Activated CD8-positive, alpha-beta T cell treated with anti-CD3 and anti-CD28 coated beads, Interleukin-2, amount 10 ng/mL, durations not matched to agents 7 days and 5 days (primary cell): ENCODE measurements at regions of chr14 and their contacts with region 1.

Region 1: GRCh38 chr14:35229495-35230089 is 62.6 kb upstream of the PSMA6 start:
- DNase-seq: no peak
- ATAC-seq: no peak
- H3K4me3 Mint-ChIP-seq: no peak overlapping the region
- H3K27ac Mint-ChIP-seq: no peak overlapping the region
- H3K4me1 Mint-ChIP-seq: peaks cover 21% of the 10 kb centered on the region
- H3K27me3 Mint-ChIP-seq: no peaks in the 10 kb centered on the region

Region 2: DNA sequence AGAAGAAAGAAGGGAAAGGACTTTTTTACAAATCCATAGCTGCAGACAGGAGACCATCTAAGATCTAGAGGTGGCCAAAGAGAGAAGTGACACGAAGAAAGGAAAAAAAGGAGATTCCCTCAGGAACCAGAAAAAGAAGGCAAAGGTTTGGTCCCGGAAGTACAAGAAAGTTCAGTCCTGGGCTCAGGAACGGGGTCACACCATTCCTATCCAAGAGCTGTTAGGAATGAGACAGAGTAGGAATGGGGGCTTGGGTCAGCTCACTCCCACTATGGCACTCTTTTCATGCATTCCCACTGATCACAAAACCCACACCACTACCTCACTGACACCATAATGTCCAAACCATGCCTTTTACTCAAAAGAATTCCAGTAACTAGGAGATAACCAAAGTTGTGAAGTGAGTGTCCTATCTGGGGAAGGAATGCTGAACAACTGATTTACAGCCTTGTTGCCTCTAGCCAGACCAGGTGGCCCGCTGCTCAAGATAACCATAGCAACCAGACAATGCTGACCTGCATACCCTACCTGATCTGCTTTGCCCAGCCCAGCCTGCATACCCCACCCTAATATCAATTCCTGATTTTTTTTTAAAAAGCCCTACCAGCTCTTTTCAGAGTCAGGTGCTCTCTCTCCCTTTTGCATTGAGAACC is 116.2 kb before region 1 on chr14:
- CTCF ChIA-PET with region 1: no interaction called
- POLR2A ChIA-PET with region 1: no interaction called
- DNase-seq: no peak
- ATAC-seq: no peak
- H3K4me3 Mint-ChIP-seq: no peak overlapping the region
- H3K27ac Mint-ChIP-seq: no peak overlapping the region
- H3K4me1 Mint-ChIP-seq: peaks cover 15% of the 10 kb centered on the region
- H3K27me3 Mint-ChIP-seq: no peaks in the 10 kb centered on the region

Region 3: GRCh38 chr14:35285168-35286002 is 55.8 kb after region 1 on chr14:
- CTCF ChIA-PET with region 1: interaction called, 44 read pairs
- POLR2A ChIA-PET with region 1: interaction called, 4 read pairs
- DNase-seq: peak; percentile 42
- ATAC-seq: peak; percentile 80
- H3K4me3 Mint-ChIP-seq: peak overlapping the region; percentile 68
- H3K27ac Mint-ChIP-seq: peak overlapping the region; percentile 85
- H3K4me1 Mint-ChIP-seq: peaks cover 48% of the 10 kb centered on the region
- H3K27me3 Mint-ChIP-seq: no peaks in the 10 kb centered on the region

Region 4: GRCh38 chr14:35301735-35302528 is 72.3 kb after region 1 on chr14:
- CTCF ChIA-PET with region 1: interaction called, 15 read pairs
- POLR2A ChIA-PET with region 1: no interaction called
- DNase-seq: no peak
- ATAC-seq: peak; percentile 53
- H3K4me3 Mint-ChIP-seq: no peak overlapping the region
- H3K27ac Mint-ChIP-seq: peak overlapping the region; percentile 62
- H3K4me1 Mint-ChIP-seq: peaks cover 52% of the 10 kb centered on the region
- H3K27me3 Mint-ChIP-seq: no peaks in the 10 kb centered on the region

Region 5: GRCh38 chr14:35331605-35332516 is 102.3 kb after region 1 on chr14:
- CTCF ChIA-PET with region 1: interaction called, 11 read pairs
- POLR2A ChIA-PET with region 1: no interaction called
- DNase-seq: no peak
- ATAC-seq: no peak
- H3K4me3 Mint-ChIP-seq: no peak overlapping the region
- H3K27ac Mint-ChIP-seq: peak overlapping the region; percentile 89
- H3K4me1 Mint-ChIP-seq: peaks cover 35% of the 10 kb centered on the region
- H3K27me3 Mint-ChIP-seq: no peaks in the 10 kb centered on the region

Region 6: DNA sequence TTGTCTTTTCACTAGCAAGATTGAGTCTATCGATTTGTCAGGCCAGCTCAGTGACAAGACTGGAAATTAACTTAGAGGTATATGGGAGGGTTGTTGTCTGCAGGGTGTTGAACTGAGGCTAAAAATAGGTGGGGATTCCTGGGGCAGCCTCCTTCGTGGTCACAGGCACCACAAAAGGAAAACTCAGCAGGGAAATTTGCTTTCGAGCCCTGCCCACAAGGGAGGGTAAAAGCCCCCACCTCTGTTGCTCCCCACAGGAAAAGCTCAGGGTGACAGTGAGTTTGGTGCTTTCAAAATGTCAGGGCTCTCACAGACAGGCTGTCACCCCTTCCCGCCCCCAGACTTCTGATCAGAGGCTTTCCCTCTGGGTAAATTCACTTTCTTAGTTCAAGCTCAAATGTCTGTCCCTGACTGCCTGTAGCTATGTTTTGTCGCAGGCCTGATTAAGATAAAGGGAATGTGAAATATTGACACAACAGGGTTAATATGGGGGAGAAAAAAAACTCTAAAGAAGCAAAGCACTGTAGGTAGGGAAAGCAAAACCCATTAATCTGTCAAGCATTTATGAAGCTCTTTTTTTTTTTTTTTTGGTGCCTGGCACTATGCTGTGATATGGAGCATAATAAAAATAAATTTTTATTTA is 186.6 kb after region 1 on chr14:
- CTCF ChIA-PET with region 1: interaction called, 132 read pairs
- POLR2A ChIA-PET with region 1: interaction called, 3 read pairs
- DNase-seq: peak; percentile 62
- ATAC-seq: peak; percentile 50
- H3K4me3 Mint-ChIP-seq: peak overlapping the region; percentile 29
- H3K27ac Mint-ChIP-seq: peak overlapping the region; percentile 79
- H3K4me1 Mint-ChIP-seq: peaks cover 51% of the 10 kb centered on the region
- H3K27me3 Mint-ChIP-seq: no peaks in the 10 kb centered on the region

Region 7: GRCh38 chr14:35459776-35460175 is 230.2 kb after region 1 on chr14:
- CTCF ChIA-PET with region 1: no interaction called
- POLR2A ChIA-PET with region 1: no interaction called
- DNase-seq: no peak
- ATAC-seq: no peak
- H3K4me3 Mint-ChIP-seq: no peak overlapping the region
- H3K27ac Mint-ChIP-seq: no peak overlapping the region
- H3K4me1 Mint-ChIP-seq: no peaks in the 10 kb centered on the region
- H3K27me3 Mint-ChIP-seq: peaks cover 4% of the 10 kb centered on the region